Heart left ventricle (tissue), 16 donors: ENCODE measurements at regions of chr12 and their contacts with region 1.

Region 1: GRCh38 chr12:91382081-91382543 is 199.5 kb upstream of the DCN start:
- DNase-seq: peak; percentile 75 to 89 (median 84)
- ATAC-seq: peak; percentile 80 to 88 (median 84)
- H3K4me3 ChIP-seq: peak overlapping the region; percentile 4 to 61 (median 50)
- H3K27ac ChIP-seq: peak overlapping the region; percentile 37 to 86 (median 73)
- H3K4me1 ChIP-seq: peaks cover 0 to 6% (median 0%) of the 10 kb centered on the region in 12 donors
- H3K27me3 ChIP-seq: no peaks in the 10 kb centered on the region
- CTCF ChIP-seq: peak; percentile 81 to 97 (median 90)
- POLR2A ChIP-seq: no peak

Region 2: GRCh38 chr12:91577586-91578539 is 195.8 kb after region 1 on chr12:
- intact Hi-C with region 1: loop called in 2 of 10 experiments (anchors 5 to 10 kb)
- DNase-seq: no peak
- ATAC-seq: peak in 2 of 4 donors; percentile 45 to 50
- H3K4me3 ChIP-seq: peak overlapping the region in 9 of 12 donors; percentile 17 to 37 (median 26)
- H3K27ac ChIP-seq: peak overlapping the region in 3 of 12 donors; percentile 10 to 45 (median 35)
- H3K4me1 ChIP-seq: peaks cover 0 to 15% (median 7%) of the 10 kb centered on the region in 12 donors
- H3K27me3 ChIP-seq: no peaks in the 10 kb centered on the region
- CTCF ChIP-seq: peak; percentile 62 to 82 (median 72)
- POLR2A ChIP-seq: no peak

Region 3: GRCh38 chr12:91811481-91812287 is 429.6 kb after region 1 on chr12:
- intact Hi-C with region 1: loop called in 4 of 10 experiments (anchors 5 to 10 kb)
- DNase-seq: peak; percentile 56 to 77 (median 67)
- ATAC-seq: peak in 3 of 4 donors; percentile 61 to 76 (median 68)
- H3K4me3 ChIP-seq: no peak overlapping the region
- H3K27ac ChIP-seq: no peak overlapping the region
- H3K4me1 ChIP-seq: no peaks in the 10 kb centered on the region
- H3K27me3 ChIP-seq: no peaks in the 10 kb centered on the region
- CTCF ChIP-seq: peak; percentile 72 to 90 (median 82)
- POLR2A ChIP-seq: no peak

Region 4: DNA sequence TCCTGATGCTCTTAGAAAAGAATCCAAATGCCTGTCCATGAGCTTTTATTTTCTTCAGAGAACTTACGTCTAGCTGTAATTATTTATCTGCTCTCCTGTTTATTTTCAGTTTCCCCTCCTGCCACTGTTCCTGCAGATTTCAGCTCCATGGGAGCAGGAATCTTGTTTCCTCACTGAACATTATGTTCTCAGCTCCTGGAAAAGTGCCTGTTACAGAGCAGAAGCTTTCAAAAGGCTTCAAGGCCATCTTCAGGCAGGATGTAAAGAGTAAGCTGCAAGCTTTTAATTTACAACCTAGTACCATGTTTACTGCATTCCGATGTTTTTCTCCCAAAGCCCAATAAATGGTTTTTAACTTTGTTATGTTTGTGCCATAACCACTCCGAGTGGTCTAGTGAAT is 861.9 kb after region 1 on chr12:
- intact Hi-C with region 1: loop called in 2 of 10 experiments (anchors 5 kb)
- DNase-seq: peak in 2 of 5 donors; percentile 32 to 61
- ATAC-seq: peak; percentile 95 to 98 (median 96)
- H3K4me3 ChIP-seq: peak overlapping the region in 1 of 12 donors; percentile 23
- H3K27ac ChIP-seq: peak overlapping the region; percentile 48 to 78 (median 68)
- H3K4me1 ChIP-seq: peaks cover 5 to 25% (median 15%) of the 10 kb centered on the region in 12 donors
- H3K27me3 ChIP-seq: no peaks in the 10 kb centered on the region
- CTCF ChIP-seq: peak in 8 of 12 donors; percentile 22 to 54 (median 32)
- POLR2A ChIP-seq: no peak

Region 5: DNA sequence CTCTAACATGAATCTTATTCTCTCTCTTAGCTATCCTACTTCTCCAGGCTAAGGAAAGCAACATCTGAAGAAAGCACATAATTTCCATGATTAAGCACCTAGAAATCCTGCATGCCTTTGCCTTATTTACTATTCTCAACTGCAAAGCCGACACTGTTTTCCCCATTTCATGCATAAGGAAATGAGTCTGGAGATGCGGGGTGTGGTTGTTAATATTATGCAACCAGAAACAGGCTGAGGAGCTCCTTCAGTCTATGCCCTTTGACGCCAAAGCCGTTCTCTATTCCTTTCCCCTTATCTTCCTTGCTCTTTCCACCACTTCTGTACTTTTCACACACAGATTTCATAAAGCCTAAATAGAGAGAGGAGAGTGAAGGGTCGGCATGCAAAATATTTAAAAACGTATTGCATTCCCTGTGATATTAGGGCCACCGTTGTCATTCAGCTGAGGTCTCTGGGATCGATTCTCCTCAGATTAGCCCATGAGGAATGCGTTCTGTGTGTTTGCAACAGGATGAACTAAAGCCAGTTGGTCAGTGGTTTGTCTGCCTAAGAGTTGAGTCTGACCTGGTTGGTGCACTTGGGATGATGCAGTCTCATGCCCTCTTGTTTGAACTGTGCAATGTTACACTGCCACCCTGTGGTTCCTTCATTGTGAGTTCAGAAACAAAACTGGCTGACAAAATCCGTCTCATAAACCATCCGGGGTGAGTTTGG is 1267.6 kb after region 1 on chr12:
- intact Hi-C with region 1: loop called in 9 of 10 experiments (anchors 1 to 5 kb)
- DNase-seq: peak in 4 of 5 donors; percentile 33 to 58 (median 44)
- ATAC-seq: peak; percentile 86 to 93 (median 91)
- H3K4me3 ChIP-seq: no peak overlapping the region
- H3K27ac ChIP-seq: no peak overlapping the region
- H3K4me1 ChIP-seq: peaks cover 0 to 11% (median 0%) of the 10 kb centered on the region in 12 donors
- H3K27me3 ChIP-seq: no peaks in the 10 kb centered on the region
- CTCF ChIP-seq: peak; percentile 48 to 79 (median 69)
- POLR2A ChIP-seq: no peak